ENCODE measurements at regions of chr9 and their contacts with region 1.

Region 1: DNA sequence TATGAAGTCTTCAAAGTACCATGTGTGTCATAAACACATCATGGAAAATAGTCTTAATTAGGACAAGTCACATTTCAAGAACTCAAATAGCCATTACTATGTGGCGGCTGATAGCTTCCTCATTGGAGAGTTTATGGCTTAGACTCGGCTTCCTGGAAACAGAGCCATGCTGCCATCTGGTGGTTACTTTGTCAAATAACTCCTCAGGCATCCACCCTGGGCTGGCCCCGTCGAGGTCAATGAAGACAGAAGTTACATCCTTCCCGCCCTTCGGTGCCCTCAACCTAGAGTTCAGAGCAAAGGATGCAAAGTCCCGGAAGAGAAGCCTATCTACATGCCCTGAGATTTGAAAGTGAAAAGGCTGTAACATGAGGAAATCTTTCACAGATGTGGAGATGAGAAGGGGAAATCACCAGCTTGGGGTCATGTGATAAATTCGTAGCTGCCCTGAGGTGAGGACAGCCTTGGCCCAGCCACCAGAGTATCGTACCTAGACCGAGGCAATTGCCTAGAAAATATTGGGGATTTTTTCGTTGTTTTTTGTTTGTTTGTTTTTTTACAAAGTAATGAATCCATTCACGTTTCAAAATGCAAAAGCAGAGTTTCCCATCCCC is 45.5 kb upstream of the ZNF169 start:
- DNase-seq: peak; percentile 61 to 91
- ATAC-seq: peak; percentile 92 to 99 (median 95)
- H3K4me3 ChIP-seq: no peak overlapping the region
- H3K4me3 Mint-ChIP-seq: no peak overlapping the region
- H3K27ac ChIP-seq: no peak overlapping the region
- H3K27ac Mint-ChIP-seq: no peak overlapping the region
- H3K4me1 ChIP-seq: peaks cover 4% of the 10 kb centered on the region
- H3K4me1 Mint-ChIP-seq: peaks cover 5% of the 10 kb centered on the region in 2 donors
- H3K27me3 ChIP-seq: peaks cover 2% of the 10 kb centered on the region
- H3K27me3 Mint-ChIP-seq: peaks cover 3 to 8% of the 10 kb centered on the region in 2 donors
- CTCF ChIP-seq: peak; percentile 92

Region 2: GRCh38 chr9:93827545-93828330 is 385.9 kb before region 1 on chr9:
- intact Hi-C with region 1: loop called (anchors 2 kb)
- DNase-seq: peak in 1 of 2 donors; percentile 49
- ATAC-seq: peak; percentile 65 to 92 (median 74)
- H3K4me3 ChIP-seq: no peak overlapping the region
- H3K4me3 Mint-ChIP-seq: no peak overlapping the region
- H3K27ac ChIP-seq: no peak overlapping the region
- H3K27ac Mint-ChIP-seq: no peak overlapping the region
- H3K4me1 ChIP-seq: peaks cover 7% of the 10 kb centered on the region
- H3K4me1 Mint-ChIP-seq: peaks cover 0 to 13% of the 10 kb centered on the region in 2 donors
- H3K27me3 ChIP-seq: peaks cover 9% of the 10 kb centered on the region
- H3K27me3 Mint-ChIP-seq: peaks cover 37 to 43% of the 10 kb centered on the region in 2 donors
- CTCF ChIP-seq: peak; percentile 49

Region 3: DNA sequence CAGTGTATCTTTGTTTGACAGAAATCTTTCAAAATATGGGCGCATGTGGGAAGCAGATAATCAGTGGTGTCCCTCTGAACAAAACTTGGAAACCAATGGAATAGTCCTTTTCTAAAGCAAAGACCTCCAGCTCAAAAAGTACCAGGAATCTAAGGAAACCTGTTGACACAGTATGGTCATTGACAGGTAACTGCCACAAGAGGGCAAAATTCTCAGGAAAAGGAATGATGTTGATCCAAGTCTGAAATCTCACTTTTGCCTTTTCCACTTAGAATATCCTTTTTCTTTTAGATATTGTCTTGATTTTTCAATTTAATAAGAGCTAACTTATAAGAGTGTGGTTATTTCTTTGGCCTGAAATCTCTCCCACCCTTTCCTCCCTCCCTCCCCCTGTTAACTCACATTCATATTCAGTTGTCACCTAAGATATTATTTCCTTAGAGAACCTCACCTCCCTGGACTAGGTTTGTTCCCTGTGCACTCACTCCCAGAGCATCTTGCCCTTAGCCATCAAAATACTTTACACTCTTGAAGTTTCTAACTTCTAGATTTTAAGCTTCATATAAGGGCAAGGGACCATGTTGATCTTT is 199.5 kb before region 1 on chr9:
- intact Hi-C with region 1: loop called (anchors 1 kb)
- DNase-seq: peak in 1 of 2 donors; percentile 39
- ATAC-seq: no peak
- H3K4me3 ChIP-seq: no peak overlapping the region
- H3K4me3 Mint-ChIP-seq: no peak overlapping the region
- H3K27ac ChIP-seq: no peak overlapping the region
- H3K27ac Mint-ChIP-seq: no peak overlapping the region
- H3K4me1 ChIP-seq: no peaks in the 10 kb centered on the region
- H3K4me1 Mint-ChIP-seq: no peaks in the 10 kb centered on the region
- H3K27me3 ChIP-seq: no peaks in the 10 kb centered on the region
- H3K27me3 Mint-ChIP-seq: peaks cover 9% of the 10 kb centered on the region in 2 donors
- CTCF ChIP-seq: no peak

Region 4: DNA sequence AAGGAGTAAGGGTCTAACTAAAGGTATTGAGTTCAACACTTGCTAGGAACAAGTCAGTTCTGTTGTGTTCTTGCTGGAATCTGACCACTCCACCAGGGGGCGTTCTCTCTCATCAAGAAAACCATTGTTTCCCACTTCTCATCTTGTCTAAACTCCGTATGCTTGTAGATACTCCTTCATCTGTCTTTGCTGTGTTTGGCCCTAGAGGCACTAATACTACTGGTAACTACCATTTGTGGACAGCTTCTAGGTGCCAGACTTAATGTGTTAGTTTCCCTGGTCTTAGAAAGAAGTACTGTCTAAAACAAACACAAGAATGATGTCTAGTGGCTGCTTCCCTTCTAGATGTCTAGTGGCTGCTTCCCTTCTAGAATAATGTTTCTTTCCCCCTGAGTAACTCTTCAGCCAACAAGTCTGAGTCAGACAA is 148.1 kb before region 1 on chr9:
- intact Hi-C with region 1: loop called (anchors 1 kb)
- DNase-seq: peak; percentile 56 to 87
- ATAC-seq: peak; percentile 73 to 75 (median 74)
- H3K4me3 ChIP-seq: no peak overlapping the region
- H3K4me3 Mint-ChIP-seq: no peak overlapping the region
- H3K27ac ChIP-seq: no peak overlapping the region
- H3K27ac Mint-ChIP-seq: no peak overlapping the region
- H3K4me1 ChIP-seq: no peaks in the 10 kb centered on the region
- H3K4me1 Mint-ChIP-seq: peaks cover 5 to 7% of the 10 kb centered on the region in 2 donors
- H3K27me3 ChIP-seq: no peaks in the 10 kb centered on the region
- H3K27me3 Mint-ChIP-seq: no peaks in the 10 kb centered on the region
- CTCF ChIP-seq: peak; percentile 90

Region 5: GRCh38 chr9:94153905-94154304 is 59.7 kb before region 1 on chr9:
- intact Hi-C with region 1: no loop called
- DNase-seq: peak in 1 of 2 donors; percentile 32
- ATAC-seq: no peak
- H3K4me3 ChIP-seq: no peak overlapping the region
- H3K4me3 Mint-ChIP-seq: no peak overlapping the region
- H3K27ac ChIP-seq: peak overlapping the region; percentile 26
- H3K27ac Mint-ChIP-seq: no peak overlapping the region
- H3K4me1 ChIP-seq: peaks cover 6% of the 10 kb centered on the region
- H3K4me1 Mint-ChIP-seq: peaks cover 0 to 7% of the 10 kb centered on the region in 2 donors
- H3K27me3 ChIP-seq: no peaks in the 10 kb centered on the region
- H3K27me3 Mint-ChIP-seq: peaks cover 0 to 8% of the 10 kb centered on the region in 2 donors
- CTCF ChIP-seq: no peak

Region 6: GRCh38 chr9:94269264-94269663 is 55.6 kb after region 1 on chr9:
- intact Hi-C with region 1: no loop called
- DNase-seq: no peak
- ATAC-seq: no peak
- H3K4me3 ChIP-seq: no peak overlapping the region
- H3K4me3 Mint-ChIP-seq: no peak overlapping the region
- H3K27ac ChIP-seq: no peak overlapping the region
- H3K27ac Mint-ChIP-seq: no peak overlapping the region
- H3K4me1 ChIP-seq: no peaks in the 10 kb centered on the region
- H3K4me1 Mint-ChIP-seq: peaks cover 10 to 19% of the 10 kb centered on the region in 2 donors
- H3K27me3 ChIP-seq: no peaks in the 10 kb centered on the region
- H3K27me3 Mint-ChIP-seq: no peaks in the 10 kb centered on the region
- CTCF ChIP-seq: no peak

Measured in natural killer cell (primary cell).